PC-3 (cell line): ENCODE measurements at regions of chr13 and their contacts with region 1.

Region 1: GRCh38 chr13:27449936-27450828 is at the start of gene MTIF3:
- DNase-seq: peak; percentile 96
- ATAC-seq: peak; percentile 85
- H3K4me3 ChIP-seq: peak within 1 kb of the TSS; percentile 93
- H3K27ac ChIP-seq: peak within 1 kb of the TSS; percentile 98
- H3K4me1 ChIP-seq: peaks cover 16% of the 10 kb centered on the region
- H3K27me3 ChIP-seq: no peaks in the 10 kb centered on the region
- CTCF ChIP-seq: no peak
- total RNA-seq, gene MTIF3: 28.2 and 43.9 TPM in 2 replicates

Region 2: DNA sequence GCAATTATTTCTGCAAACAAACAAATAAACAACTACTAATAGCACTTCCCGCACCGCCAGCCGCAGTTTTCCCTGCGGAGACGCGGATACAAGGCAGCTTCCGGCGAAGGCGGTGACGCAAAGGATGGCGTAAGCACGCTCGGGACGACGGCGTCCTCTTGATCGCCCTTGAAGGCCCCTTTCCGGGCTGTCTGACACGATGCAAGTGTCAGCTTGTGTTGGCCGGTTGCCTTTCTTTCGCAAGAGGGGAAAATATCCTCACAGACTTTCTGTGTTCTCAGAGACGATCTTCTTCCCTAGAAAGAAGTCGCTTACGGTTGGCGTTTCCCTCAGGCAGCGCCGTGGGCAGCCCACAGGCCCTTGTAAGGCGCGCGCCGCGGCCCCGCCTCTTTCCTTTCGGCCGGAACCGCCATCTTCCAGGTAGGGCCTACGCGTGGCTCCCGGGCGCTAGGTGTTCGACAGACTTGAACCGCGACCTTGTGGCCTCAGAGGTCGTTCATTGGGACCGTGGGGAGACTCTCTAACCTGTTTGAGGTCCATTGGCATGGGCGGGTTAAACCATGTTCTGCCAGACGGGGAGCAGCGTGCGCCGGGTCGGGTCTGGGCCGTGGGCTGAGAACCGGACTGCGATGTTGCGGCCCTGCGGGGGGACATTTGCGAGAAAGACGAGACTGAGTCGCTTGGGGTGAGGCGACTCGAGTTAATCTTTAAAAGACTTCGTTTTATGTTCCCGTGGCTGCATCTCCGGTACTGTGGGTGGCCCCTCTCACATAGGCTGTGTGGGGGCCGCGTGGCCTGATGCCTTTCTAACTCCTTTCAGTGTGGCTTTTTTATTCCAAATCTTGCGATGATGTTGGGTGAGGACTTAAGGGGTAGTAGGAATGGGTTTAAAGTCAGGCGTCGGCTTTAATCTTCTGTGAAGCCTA is 198.8 kb before region 1 on chr13 and contains the start of gene RPL21:
- CTCF ChIA-PET with region 1: no interaction called
- POLR2A ChIA-PET with region 1: no interaction called
- intact Hi-C with region 1: no loop called
- DNase-seq: peak; percentile 90
- ATAC-seq: peak; percentile 97
- H3K4me3 ChIP-seq: peak within 1 kb of the TSS; percentile 90
- H3K27ac ChIP-seq: peak within 1 kb of the TSS; percentile 89
- H3K4me1 ChIP-seq: peaks cover 20% of the 10 kb centered on the region
- H3K27me3 ChIP-seq: no peaks in the 10 kb centered on the region
- CTCF ChIP-seq: no peak
- total RNA-seq, gene RPL21: 380 and 552 TPM in 2 replicates

Region 3: GRCh38 chr13:27424246-27425157 is 25.7 kb before region 1 on chr13 and contains the start of gene GTF3A:
- CTCF ChIA-PET with region 1: no interaction called
- POLR2A ChIA-PET with region 1: interaction called, 9 read pairs
- intact Hi-C with region 1: loop called (anchors 1 kb)
- DNase-seq: peak; percentile 88
- ATAC-seq: peak; percentile 55
- H3K4me3 ChIP-seq: peak within 1 kb of the TSS; percentile 69
- H3K27ac ChIP-seq: peak within 1 kb of the TSS; percentile 78
- H3K4me1 ChIP-seq: peaks cover 37% of the 10 kb centered on the region
- H3K27me3 ChIP-seq: no peaks in the 10 kb centered on the region
- CTCF ChIP-seq: no peak
- total RNA-seq, gene GTF3A: 174 and 201 TPM in 2 replicates

Region 4: GRCh38 chr13:27476943-27477703 is 26.9 kb after region 1 on chr13:
- CTCF ChIA-PET with region 1: no interaction called
- POLR2A ChIA-PET with region 1: interaction called, 4 read pairs
- intact Hi-C with region 1: loop called (anchors 1 kb)
- DNase-seq: peak; percentile 89
- ATAC-seq: peak; percentile 90
- H3K4me3 ChIP-seq: peak overlapping the region; percentile 41; the same call in 1 of the 2 replicates
- H3K27ac ChIP-seq: peak overlapping the region; percentile 83
- H3K4me1 ChIP-seq: peaks cover 26% of the 10 kb centered on the region
- H3K27me3 ChIP-seq: no peaks in the 10 kb centered on the region
- CTCF ChIP-seq: peak; percentile 16; the same call in 1 of the 2 replicates

Region 5: GRCh38 chr13:27658546-27658945 is 208.4 kb after region 1 on chr13:
- CTCF ChIA-PET with region 1: no interaction called
- POLR2A ChIA-PET with region 1: no interaction called
- intact Hi-C with region 1: no loop called
- DNase-seq: peak; percentile 57
- ATAC-seq: peak; percentile 77
- H3K4me3 ChIP-seq: no peak overlapping the region
- H3K27ac ChIP-seq: peak overlapping the region; percentile 28; the same call in 1 of the 2 replicates
- H3K4me1 ChIP-seq: peaks cover 30% of the 10 kb centered on the region
- H3K27me3 ChIP-seq: no peaks in the 10 kb centered on the region
- CTCF ChIP-seq: no peak